CD14-positive monocyte (primary cell): ENCODE measurements at regions of chr1 and their contacts with region 1.

Region 1: GRCh38 chr1:210400043-210400840 is 71.5 kb downstream of the HHAT start:
- DNase-seq: peak; percentile 20 to 39 (median 22)
- H3K4me3 ChIP-seq: no peak overlapping the region
- H3K4me3 Mint-ChIP-seq: no peak overlapping the region
- H3K27ac ChIP-seq: no peak overlapping the region
- H3K27ac Mint-ChIP-seq: peak overlapping the region in 1 of 7 donors; percentile 4
- H3K4me1 ChIP-seq: no peaks in the 10 kb centered on the region
- H3K4me1 Mint-ChIP-seq: no peaks in the 10 kb centered on the region
- H3K27me3 ChIP-seq: no peaks in the 10 kb centered on the region
- H3K27me3 Mint-ChIP-seq: peaks cover 0 to 1% (median 1%) of the 10 kb centered on the region in 3 donors
- CTCF ChIP-seq: peak; percentile 80

Region 2: DNA sequence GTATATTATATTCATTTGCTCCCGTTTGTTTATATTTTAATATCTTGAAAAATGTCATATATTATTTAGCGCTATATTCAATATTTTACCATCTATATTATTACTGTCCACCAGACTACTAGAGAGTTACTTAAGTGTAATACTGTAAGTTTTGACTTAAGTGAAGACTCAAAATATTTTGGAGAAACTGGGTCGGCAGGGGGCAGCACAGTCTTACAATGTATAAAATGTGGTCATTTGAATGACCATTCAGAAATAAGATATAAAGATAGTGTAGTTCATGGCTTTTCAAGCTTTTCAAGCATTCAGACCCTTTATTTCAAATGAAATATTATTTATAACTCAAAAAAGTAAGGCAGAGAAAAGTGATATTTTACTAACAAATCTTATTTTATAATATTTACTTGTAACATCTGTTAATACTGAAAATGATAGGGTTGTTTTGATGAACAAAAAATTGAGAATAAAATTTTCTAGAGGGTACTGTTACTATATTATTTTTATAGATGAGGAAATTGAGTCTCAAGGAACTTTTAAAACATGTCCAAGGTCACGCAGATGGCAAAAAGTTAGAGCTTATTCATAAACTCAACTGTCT is 256.7 kb before region 1 on chr1:
- intact Hi-C with region 1: loop called in 1 of 2 experiments (anchors 10 kb)
- DNase-seq: peak in 2 of 3 donors; percentile 2 to 10
- H3K4me3 ChIP-seq: no peak overlapping the region
- H3K4me3 Mint-ChIP-seq: no peak overlapping the region
- H3K27ac ChIP-seq: no peak overlapping the region
- H3K27ac Mint-ChIP-seq: no peak overlapping the region
- H3K4me1 ChIP-seq: no peaks in the 10 kb centered on the region
- H3K4me1 Mint-ChIP-seq: no peaks in the 10 kb centered on the region
- H3K27me3 ChIP-seq: no peaks in the 10 kb centered on the region
- H3K27me3 Mint-ChIP-seq: peaks cover 0 to 2% (median 0%) of the 10 kb centered on the region in 3 donors
- CTCF ChIP-seq: peak; percentile 32

Region 3: DNA sequence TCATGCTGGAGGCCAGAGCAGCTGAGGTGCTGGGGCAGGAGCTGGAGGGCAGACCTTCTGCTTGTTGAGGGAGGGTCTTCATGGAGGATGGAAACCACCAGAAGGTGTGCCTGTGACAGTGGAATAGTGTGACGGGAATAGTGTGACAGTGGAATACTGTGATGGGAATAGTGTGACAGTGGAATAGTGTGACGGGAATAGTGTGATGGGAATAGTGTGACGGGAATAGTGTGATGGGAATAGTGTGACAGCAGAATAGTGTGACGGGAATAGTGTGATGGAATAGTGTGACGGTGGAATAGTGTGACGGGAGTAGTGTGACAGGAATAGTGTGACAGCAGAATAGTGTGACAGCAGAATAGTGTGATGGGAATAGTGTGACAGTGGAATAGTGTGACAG is 253.5 kb after region 1 on chr1:
- intact Hi-C with region 1: no loop called
- DNase-seq: peak in 1 of 3 donors; percentile 7
- H3K4me3 ChIP-seq: no peak overlapping the region
- H3K4me3 Mint-ChIP-seq: no peak overlapping the region
- H3K27ac ChIP-seq: no peak overlapping the region
- H3K27ac Mint-ChIP-seq: no peak overlapping the region
- H3K4me1 ChIP-seq: no peaks in the 10 kb centered on the region
- H3K4me1 Mint-ChIP-seq: no peaks in the 10 kb centered on the region
- H3K27me3 ChIP-seq: no peaks in the 10 kb centered on the region
- H3K27me3 Mint-ChIP-seq: no peaks in the 10 kb centered on the region
- CTCF ChIP-seq: no peak

Region 4: DNA sequence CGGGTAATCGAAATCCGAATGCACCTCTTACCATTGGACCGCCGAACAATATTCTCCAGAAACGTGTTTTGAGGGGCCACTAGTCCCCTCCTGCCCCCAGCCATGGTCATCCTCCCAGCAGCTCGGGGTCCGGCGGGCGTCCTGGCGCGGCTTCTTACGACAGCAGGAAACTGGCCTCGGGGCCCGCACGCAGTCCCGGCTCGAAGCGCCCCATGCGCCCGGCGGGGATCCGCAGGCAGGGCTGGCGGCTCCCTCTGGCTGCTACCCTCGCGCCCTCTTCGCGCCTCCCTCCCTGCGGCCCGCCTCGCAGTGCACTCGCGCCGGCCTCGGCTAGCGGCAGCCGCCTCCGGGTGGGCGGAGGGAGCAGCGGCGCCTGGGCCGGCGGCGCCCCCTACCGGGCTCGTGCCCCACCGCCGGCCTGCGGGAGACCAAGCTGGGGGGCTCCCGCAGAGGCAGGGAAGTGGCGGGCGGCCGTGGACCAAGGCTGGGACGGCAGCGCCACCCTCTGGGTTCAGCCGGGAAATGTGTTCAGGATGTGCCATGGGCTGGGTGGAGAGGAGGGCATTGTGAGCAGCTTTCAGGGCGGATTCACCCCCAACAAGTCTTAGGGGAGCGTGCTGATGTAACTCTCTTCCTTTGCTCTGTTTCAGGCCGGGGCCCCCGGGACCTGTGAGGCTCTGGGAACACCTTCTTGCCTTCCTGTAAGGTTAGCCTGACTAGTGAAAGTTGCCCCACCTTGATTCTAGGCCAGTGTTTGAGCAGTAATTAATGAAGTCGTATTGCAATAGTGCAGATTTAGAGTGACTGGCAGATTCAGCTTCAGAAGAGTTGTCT is 733.8 kb after region 1 on chr1 and contains the start of gene KCNH1:
- intact Hi-C with region 1: loop called in 1 of 2 experiments (anchors 10 kb)
- DNase-seq: peak; percentile 12 to 31 (median 20)
- H3K4me3 ChIP-seq: peak within 1 kb of the TSS in 1 of 3 experiments; percentile 42
- H3K4me3 Mint-ChIP-seq: peak within 1 kb of the TSS; percentile 58 to 87
- H3K27ac ChIP-seq: no peak within 1 kb of the TSS
- H3K27ac Mint-ChIP-seq: no peak within 1 kb of the TSS
- H3K4me1 ChIP-seq: peaks cover 4 to 11% of the 10 kb centered on the region in 2 donors
- H3K4me1 Mint-ChIP-seq: peaks cover 5% of the 10 kb centered on the region
- H3K27me3 ChIP-seq: peaks cover 51 to 57% of the 10 kb centered on the region in 2 donors
- H3K27me3 Mint-ChIP-seq: peaks cover 39 to 60% (median 41%) of the 10 kb centered on the region in 3 donors
- CTCF ChIP-seq: peak; percentile 74
- polyA plus RNA-seq, gene KCNH1: not detected